Body of pancreas (tissue), 4 donors: ENCODE measurements at regions of chr6 and their contacts with region 1.

Region 1: GRCh38 chr6:148166339-148166968 is 176.2 kb upstream of the SASH1 start:
- DNase-seq: peak in 1 of 4 donors; percentile 4
- ATAC-seq: no peak
- H3K4me3 ChIP-seq: no peak overlapping the region
- H3K27ac ChIP-seq: no peak overlapping the region
- H3K4me1 ChIP-seq: no peaks in the 10 kb centered on the region
- H3K27me3 ChIP-seq: no peaks in the 10 kb centered on the region
- CTCF ChIP-seq: peak; percentile 29 to 74 (median 69)
- POLR2A ChIP-seq: no peak

Region 2: GRCh38 chr6:147506704-147507114 is 659.7 kb before region 1 on chr6:
- intact Hi-C with region 1: loop called (anchors 10 kb)
- DNase-seq: peak; percentile 60 to 73 (median 64)
- ATAC-seq: peak; percentile 58
- H3K4me3 ChIP-seq: no peak overlapping the region
- H3K27ac ChIP-seq: no peak overlapping the region
- H3K4me1 ChIP-seq: peaks cover 33% of the 10 kb centered on the region
- H3K27me3 ChIP-seq: no peaks in the 10 kb centered on the region
- CTCF ChIP-seq: peak; percentile 52 to 74 (median 65)
- POLR2A ChIP-seq: no peak

Region 3: GRCh38 chr6:148395583-148396101 is 229.2 kb after region 1 on chr6:
- intact Hi-C with region 1: no loop called
- DNase-seq: no peak
- ATAC-seq: no peak
- H3K4me3 ChIP-seq: no peak overlapping the region
- H3K27ac ChIP-seq: no peak overlapping the region
- H3K4me1 ChIP-seq: peaks cover 10% of the 10 kb centered on the region
- H3K27me3 ChIP-seq: no peaks in the 10 kb centered on the region
- CTCF ChIP-seq: no peak
- POLR2A ChIP-seq: no peak